ENCODE measurements at regions of chr2 and their contacts with region 1.

Region 1: GRCh38 chr2:236816197-236817170 is 246.9 kb downstream of the ACKR3 start:
- DNase-seq: no peak
- ATAC-seq: no peak
- H3K4me3 ChIP-seq: no peak overlapping the region
- H3K27ac ChIP-seq: no peak overlapping the region
- H3K4me1 ChIP-seq: peaks cover 0 to 15% (median 4%) of the 10 kb centered on the region in 4 donors
- H3K27me3 ChIP-seq: no peaks in the 10 kb centered on the region
- CTCF ChIP-seq: no peak
- POLR2A ChIP-seq: no peak

Region 2: GRCh38 chr2:236833501-236834073 is 17.1 kb after region 1 on chr2:
- intact Hi-C with region 1: loop called in 1 of 2 experiments (anchors 2 kb)
- DNase-seq: no peak
- ATAC-seq: peak in 2 of 4 donors; percentile 11 to 44
- H3K4me3 ChIP-seq: no peak overlapping the region
- H3K27ac ChIP-seq: no peak overlapping the region
- H3K4me1 ChIP-seq: peaks cover 0 to 35% (median 15%) of the 10 kb centered on the region in 4 donors
- H3K27me3 ChIP-seq: no peaks in the 10 kb centered on the region
- CTCF ChIP-seq: no peak
- POLR2A ChIP-seq: peak; percentile 33

Region 3: DNA sequence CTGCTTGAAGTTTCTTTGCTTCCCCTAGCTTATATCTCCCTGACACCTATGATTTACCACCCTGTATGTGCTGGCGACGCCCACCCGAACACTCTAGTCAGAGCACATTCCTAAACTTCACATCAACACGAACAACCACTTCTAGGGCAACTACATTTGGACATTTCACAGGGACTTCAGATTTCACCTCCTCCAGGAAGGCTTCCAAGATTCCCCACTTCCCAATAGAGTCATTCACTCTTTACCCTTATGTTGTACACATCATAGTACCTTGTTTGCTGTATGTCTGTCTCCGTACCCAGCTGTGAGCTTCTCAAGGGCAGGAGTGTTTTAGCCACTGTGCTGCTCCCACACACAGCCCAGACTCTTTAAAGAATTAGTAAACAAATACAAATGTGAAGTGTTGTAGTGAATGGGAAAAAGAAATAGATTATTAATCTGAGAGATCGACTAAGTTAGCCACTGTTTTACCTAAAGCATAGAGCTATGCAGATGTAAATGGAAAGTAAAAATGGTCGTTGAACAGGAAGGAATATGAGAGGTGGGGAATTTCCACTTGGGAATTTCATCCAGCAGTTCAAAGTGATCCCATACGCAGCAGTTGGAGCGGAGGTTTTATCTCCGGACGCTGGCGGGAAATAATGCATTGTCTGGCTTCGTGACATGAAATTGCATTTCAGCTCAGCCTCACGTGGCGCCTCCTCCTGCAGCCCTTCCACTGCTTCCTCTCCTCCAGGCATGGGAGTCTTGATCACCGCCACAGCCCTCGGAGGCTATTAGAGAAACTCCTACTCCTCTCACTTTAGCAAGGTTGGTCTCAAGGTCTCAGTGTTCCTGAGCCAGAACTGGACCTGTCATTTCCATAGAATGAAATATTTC is 35.9 kb after region 1 on chr2:
- intact Hi-C with region 1: no loop called
- DNase-seq: peak in 1 of 3 donors; percentile 54
- ATAC-seq: peak; percentile 56 to 79 (median 65)
- H3K4me3 ChIP-seq: no peak overlapping the region
- H3K27ac ChIP-seq: peak overlapping the region in 1 of 3 donors; percentile 46
- H3K4me1 ChIP-seq: no peaks in the 10 kb centered on the region
- H3K27me3 ChIP-seq: no peaks in the 10 kb centered on the region
- CTCF ChIP-seq: no peak
- POLR2A ChIP-seq: no peak